SK-N-SH (cell line): ENCODE measurements at regions of chr17 and their contacts with region 1.

Region 1: GRCh38 chr17:79818026-79818758 is 21.0 kb downstream of the CBX4 start:
- DNase-seq: no peak
- H3K4me3 ChIP-seq: no peak overlapping the region
- H3K27ac ChIP-seq: no peak overlapping the region
- H3K4me1 ChIP-seq: peaks cover 0 to 9% of the 10 kb centered on the region in 2 experiments; a peak in 1 of 4 replicates
- H3K27me3 ChIP-seq: no peaks in the 10 kb centered on the region
- CTCF ChIP-seq: no peak
- EP300 ChIP-seq: no peak
- RAD21 ChIP-seq: no peak

Region 2: GRCh38 chr17:79831367-79832210 is 13.4 kb after region 1 on chr17:
- CTCF ChIA-PET with region 1: interaction called, 62 read pairs
- POLR2A ChIA-PET with region 1: interaction called, 7 read pairs
- DNase-seq: peak; percentile 87
- H3K4me3 ChIP-seq: no peak overlapping the region
- H3K27ac ChIP-seq: peak overlapping the region in 1 of 2 experiments; percentile 77; a peak in 1 of 4 replicates
- H3K4me1 ChIP-seq: peaks cover 5 to 41% of the 10 kb centered on the region in 2 experiments; a peak in 2 of 4 replicates
- H3K27me3 ChIP-seq: no peaks in the 10 kb centered on the region
- CTCF ChIP-seq: no peak
- EP300 ChIP-seq: no peak
- RAD21 ChIP-seq: no peak

Region 3: GRCh38 chr17:79883202-79883601 is 65.0 kb after region 1 on chr17:
- CTCF ChIA-PET with region 1: no interaction called
- POLR2A ChIA-PET with region 1: no interaction called
- DNase-seq: no peak
- H3K4me3 ChIP-seq: no peak overlapping the region
- H3K27ac ChIP-seq: no peak overlapping the region
- H3K4me1 ChIP-seq: no peaks in the 10 kb centered on the region
- H3K27me3 ChIP-seq: peaks cover 5% of the 10 kb centered on the region
- CTCF ChIP-seq: no peak
- EP300 ChIP-seq: no peak
- RAD21 ChIP-seq: no peak